ENCODE measurements at regions of chr16 and their contacts with region 1.

Region 1: GRCh38 chr16:31117391-31118197 is at the start of gene KAT8:
- DNase-seq: peak; percentile 98 to 100
- H3K4me3 ChIP-seq: peak within 1 kb of the TSS; percentile 74
- H3K27ac ChIP-seq: peak within 1 kb of the TSS; percentile 91
- H3K4me1 ChIP-seq: peaks cover 16% of the 10 kb centered on the region
- H3K27me3 ChIP-seq: no peaks in the 10 kb centered on the region
- CTCF ChIP-seq: no peak
- total RNA-seq, gene KAT8: 81.4 and 84.3 TPM in 2 replicates

Region 2: DNA sequence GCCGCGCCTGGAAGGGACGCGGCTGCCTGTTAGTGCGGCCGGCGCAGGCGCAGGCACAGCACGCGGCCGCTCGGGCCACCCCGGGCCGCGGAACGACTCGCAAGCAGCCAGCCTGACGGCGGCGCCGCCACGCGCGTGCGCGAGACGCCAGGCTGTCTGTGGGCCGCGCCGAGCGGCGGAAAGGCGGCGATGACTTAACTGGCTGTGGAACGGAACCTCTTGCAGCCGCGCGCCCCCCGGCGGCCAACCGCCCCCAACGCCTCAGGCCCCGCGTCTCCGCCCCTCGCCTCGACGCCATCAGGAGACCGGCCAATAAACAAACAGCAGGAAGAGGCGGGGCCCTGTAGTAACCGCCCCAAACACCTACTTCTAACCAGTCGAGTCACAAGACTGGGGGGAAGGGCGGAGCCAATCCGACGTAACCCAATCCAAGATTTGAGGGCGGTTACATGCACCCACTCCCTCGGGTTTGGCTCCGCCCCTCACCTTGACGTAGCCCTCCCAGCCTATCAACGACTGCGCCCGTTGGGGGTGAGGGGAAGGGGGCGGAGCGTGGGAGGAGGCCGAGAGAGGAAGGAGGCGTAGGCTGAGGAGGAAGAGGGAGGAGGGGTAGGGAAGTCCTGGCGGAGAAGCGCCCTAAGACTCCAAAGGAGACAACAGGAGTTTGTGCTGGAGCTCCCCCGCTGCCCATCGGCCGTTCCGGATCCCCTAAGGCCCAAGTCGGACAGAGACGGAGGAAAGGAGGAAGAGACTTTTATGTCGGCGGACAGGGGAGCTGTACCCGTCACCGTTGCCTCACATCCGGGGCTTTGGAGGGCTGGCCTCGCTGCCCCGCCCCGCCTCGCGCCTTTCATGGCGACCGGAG is 459.5 kb before region 1 on chr16 and contains the start of gene FBRS:
- CTCF ChIA-PET with region 1: no interaction called
- POLR2A ChIA-PET with region 1: no interaction called
- intact Hi-C with region 1: no loop called
- DNase-seq: peak; percentile 100
- H3K4me3 ChIP-seq: peak within 1 kb of the TSS; percentile 68
- H3K27ac ChIP-seq: peak within 1 kb of the TSS; percentile 86
- H3K4me1 ChIP-seq: peaks cover 26% of the 10 kb centered on the region
- H3K27me3 ChIP-seq: no peaks in the 10 kb centered on the region
- CTCF ChIP-seq: peak; percentile 66
- total RNA-seq, gene FBRS: 87.5 and 128 TPM in 2 replicates

Region 3: DNA sequence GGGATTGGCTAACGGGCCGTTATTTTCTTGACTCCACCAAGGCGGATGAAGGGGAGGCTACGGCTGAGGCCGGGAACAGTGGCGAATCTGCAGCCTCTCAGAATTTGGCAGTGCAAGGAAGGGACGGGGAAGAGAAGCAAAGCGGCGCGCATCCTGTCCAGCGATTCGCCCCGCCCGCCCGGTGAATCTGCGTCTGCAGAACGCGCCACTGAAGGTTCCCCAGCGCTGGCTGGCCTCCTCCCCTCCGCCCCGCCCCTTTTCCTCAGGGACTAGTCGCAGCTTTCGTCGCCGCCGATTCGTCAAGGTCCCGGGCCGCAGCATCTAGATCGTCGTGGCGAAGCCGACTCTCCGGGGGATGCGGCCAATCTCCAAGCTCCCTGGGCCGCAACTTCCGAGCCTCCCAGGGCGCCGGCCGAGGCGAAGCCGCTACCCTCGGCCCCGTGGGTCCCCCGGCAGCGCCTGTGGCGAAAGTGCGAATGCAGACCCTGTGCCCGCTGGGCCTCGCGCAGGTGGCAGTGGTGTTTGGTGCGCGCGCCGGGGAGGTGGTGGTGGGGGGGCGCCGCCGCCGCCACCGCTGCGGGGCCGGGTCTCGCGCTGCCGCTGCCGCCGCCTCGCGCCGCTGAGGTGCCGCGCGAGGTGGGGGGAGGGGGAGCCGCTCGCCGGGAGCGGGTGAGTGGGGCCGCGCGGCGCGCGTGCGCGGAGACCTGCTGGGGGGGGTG is 160.0 kb before region 1 on chr16 and contains the start of gene SETD1A:
- CTCF ChIA-PET with region 1: no interaction called
- POLR2A ChIA-PET with region 1: interaction called, 26 read pairs
- intact Hi-C with region 1: no loop called
- DNase-seq: peak; percentile 86 to 96
- H3K4me3 ChIP-seq: peak within 1 kb of the TSS; percentile 97
- H3K27ac ChIP-seq: peak within 1 kb of the TSS; percentile 82
- H3K4me1 ChIP-seq: peaks cover 9% of the 10 kb centered on the region
- H3K27me3 ChIP-seq: no peaks in the 10 kb centered on the region
- CTCF ChIP-seq: no peak
- total RNA-seq, gene SETD1A: 29.6 and 33.2 TPM in 2 replicates

Region 4: DNA sequence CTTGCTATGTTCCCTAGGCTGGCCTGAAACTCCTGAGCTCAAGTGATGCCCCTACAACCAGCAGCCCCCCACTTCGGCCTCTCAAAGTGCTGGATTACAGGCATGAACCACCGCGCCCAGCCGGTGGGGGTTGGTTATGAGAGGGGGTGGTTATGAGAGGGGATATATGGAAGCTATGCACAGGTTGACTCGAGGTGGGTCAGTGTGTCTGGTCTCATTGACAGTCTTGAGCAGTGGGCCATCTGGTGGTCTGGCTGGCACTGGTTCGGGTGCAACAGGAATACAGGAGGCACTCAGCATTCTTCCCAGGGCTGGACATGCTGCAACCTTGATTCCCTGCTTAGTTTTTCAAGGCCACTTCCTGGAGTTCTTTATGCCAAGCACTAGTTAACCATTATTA is 101.6 kb before region 1 on chr16:
- CTCF ChIA-PET with region 1: no interaction called
- POLR2A ChIA-PET with region 1: no interaction called
- intact Hi-C with region 1: no loop called
- DNase-seq: no peak
- H3K4me3 ChIP-seq: no peak overlapping the region
- H3K27ac ChIP-seq: no peak overlapping the region
- H3K4me1 ChIP-seq: no peaks in the 10 kb centered on the region
- H3K27me3 ChIP-seq: peaks cover 17% of the 10 kb centered on the region; the same call in 1 of the 2 replicates
- CTCF ChIP-seq: no peak

Region 5: GRCh38 chr16:31073968-31074813 is 43.4 kb before region 1 on chr16 and contains the starts of genes ZNF646 and ZNF668:
- CTCF ChIA-PET with region 1: no interaction called
- POLR2A ChIA-PET with region 1: interaction called, 16 read pairs
- intact Hi-C with region 1: no loop called
- DNase-seq: peak; percentile 98 to 99
- H3K4me3 ChIP-seq: peak within 1 kb of the TSS; percentile 89
- H3K27ac ChIP-seq: peak within 1 kb of the TSS; percentile 62
- H3K4me1 ChIP-seq: peaks cover 20% of the 10 kb centered on the region
- H3K27me3 ChIP-seq: no peaks in the 10 kb centered on the region
- CTCF ChIP-seq: no peak
- total RNA-seq, gene ZNF646: 25.4 and 30.7 TPM in 2 replicates
- total RNA-seq, gene ZNF668: 13.2 and 17.4 TPM in 2 replicates

Region 6: GRCh38 chr16:31128711-31129567 is 11.3 kb after region 1 on chr16:
- CTCF ChIA-PET with region 1: no interaction called
- POLR2A ChIA-PET with region 1: interaction called, 29 read pairs
- intact Hi-C with region 1: loop called (anchors 2 kb)
- DNase-seq: peak; percentile 69 to 94
- H3K4me3 ChIP-seq: no peak overlapping the region
- H3K27ac ChIP-seq: peak overlapping the region; percentile 91
- H3K4me1 ChIP-seq: peaks cover 56% of the 10 kb centered on the region
- H3K27me3 ChIP-seq: no peaks in the 10 kb centered on the region
- CTCF ChIP-seq: no peak

Region 7: GRCh38 chr16:31179747-31180459 is 62.3 kb after region 1 on chr16 and contains the start of gene FUS:
- CTCF ChIA-PET with region 1: no interaction called
- POLR2A ChIA-PET with region 1: interaction called, 20 read pairs
- intact Hi-C with region 1: no loop called
- DNase-seq: peak; percentile 80 to 93
- H3K4me3 ChIP-seq: peak within 1 kb of the TSS; percentile 83
- H3K27ac ChIP-seq: peak within 1 kb of the TSS; percentile 94
- H3K4me1 ChIP-seq: peaks cover 22% of the 10 kb centered on the region
- H3K27me3 ChIP-seq: no peaks in the 10 kb centered on the region
- CTCF ChIP-seq: no peak
- total RNA-seq, gene FUS: 429 and 637 TPM in 2 replicates

Region 8: DNA sequence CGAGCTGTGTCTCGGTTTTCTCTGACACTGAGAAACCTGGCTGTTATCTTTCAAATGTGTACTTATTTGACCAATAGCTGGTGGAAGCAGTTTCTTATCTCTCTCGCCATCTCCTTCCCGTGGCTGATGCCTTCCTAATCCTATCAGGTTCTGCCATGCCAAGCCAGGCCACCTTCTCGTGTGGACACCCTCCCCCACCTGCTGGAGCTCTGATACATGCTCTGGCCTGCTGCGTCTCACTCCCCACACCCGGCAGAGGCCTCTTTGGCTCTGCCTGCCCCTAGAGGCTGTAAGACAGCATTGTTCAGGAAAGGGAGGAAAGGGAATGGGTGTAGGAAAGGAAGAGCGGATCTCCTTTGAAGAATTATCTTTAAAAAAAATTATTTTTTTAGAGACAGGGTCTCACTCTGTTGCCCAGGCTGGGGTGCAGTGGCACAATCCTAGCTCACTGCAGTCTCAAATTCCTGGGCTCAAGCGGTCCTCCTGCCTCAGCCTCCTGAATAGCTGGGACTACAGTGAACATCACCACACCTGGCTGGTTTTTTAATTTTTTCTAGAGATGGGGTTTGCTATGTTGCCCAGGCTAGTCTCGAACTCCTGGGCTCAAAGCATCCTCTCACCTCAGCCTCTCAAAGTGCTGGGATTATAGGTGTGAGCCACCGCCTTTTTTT is 334.2 kb after region 1 on chr16:
- CTCF ChIA-PET with region 1: no interaction called
- POLR2A ChIA-PET with region 1: interaction called, 43 read pairs
- intact Hi-C with region 1: no loop called
- DNase-seq: peak; percentile 44 to 57
- H3K4me3 ChIP-seq: no peak overlapping the region
- H3K27ac ChIP-seq: peak overlapping the region; percentile 75; the same call in 1 of the 2 replicates
- H3K4me1 ChIP-seq: peaks cover 49% of the 10 kb centered on the region
- H3K27me3 ChIP-seq: no peaks in the 10 kb centered on the region
- CTCF ChIP-seq: peak; percentile 66; the same call in 1 of the 2 replicates

Measured in PC-9 (cell line).